ENCODE measurements at regions of chr2 and their contacts with region 1.

Region 1: DNA sequence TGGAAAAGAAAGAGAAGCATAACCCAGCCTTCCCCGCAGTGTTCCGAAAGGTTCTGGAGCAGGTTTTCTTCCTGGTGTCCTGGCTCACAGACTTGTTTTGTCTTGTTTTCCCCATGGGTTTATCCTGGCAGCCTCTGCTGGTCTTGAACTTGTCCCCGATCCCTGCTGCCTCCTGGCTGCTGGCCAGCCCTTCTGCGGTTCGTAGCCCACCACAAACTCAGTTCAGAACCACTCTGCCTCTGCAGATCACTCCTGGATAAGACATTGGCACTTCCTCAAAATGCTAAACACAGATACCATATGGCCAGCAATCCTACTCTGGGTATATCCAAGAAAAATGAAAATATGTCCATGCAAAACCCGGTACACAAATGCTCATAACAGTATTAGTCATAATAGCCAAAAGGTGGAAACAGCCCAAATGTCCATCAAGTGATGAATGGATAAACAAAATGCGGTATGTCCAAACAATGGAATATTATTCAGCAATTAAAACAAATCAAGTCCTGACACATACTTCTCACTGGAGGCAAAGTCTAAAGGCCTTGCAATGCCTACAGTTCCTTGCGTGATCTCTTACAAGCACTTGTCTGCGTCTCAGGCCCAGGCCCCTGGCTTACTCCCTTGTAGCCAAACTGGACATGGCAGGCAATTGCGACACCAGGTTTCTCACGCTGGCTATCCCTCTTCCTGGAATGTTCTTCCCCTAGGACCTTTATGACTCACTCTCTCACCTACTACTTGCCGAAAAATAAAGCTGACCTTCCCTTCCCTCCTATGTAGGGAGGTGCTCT is 28.0 kb upstream of the ARHGEF4 start:
- DNase-seq: no peak
- ATAC-seq: no peak
- H3K4me3 ChIP-seq: no peak overlapping the region
- H3K27ac ChIP-seq: no peak overlapping the region
- H3K4me1 ChIP-seq: no peaks in the 10 kb centered on the region
- H3K27me3 ChIP-seq: no peaks in the 10 kb centered on the region
- CTCF ChIP-seq: no peak
- EP300 ChIP-seq: no peak
- POLR2A ChIP-seq: no peak
- RAD21 ChIP-seq: no peak

Region 2: DNA sequence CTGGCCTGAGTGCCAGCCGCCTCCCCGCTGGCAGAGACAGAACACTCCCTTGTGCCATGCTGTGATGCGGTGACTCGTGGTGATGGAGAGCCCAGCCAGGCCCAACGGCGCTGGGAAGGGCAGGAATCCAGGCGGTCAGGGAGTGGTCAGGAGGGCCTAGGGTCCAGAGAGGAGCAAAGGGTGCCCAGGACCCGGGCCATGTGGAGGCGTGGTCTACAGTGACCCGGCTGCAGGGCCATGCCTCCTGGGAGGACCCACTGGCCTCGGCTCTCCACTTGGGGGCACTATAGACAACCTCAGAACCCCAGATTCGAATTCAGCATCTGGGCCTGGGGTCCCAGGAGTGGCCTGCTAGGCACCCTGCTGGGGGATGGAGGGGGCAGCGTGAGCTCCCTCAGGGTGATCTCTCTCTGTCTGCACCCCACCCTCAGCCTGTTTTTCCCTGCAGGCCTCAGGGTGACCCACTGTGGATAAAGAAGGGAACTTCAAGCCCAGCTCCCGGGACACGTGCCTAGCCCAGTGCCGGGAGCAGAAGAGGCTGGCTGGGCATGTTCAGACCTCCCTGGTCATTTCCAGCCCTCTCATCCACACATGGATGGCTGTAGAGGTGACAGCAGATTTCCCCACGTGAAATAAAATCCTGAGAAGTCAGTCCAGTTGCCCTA is 40.4 kb before region 1 on chr2:
- CTCF ChIA-PET with region 1: no interaction called
- POLR2A ChIA-PET with region 1: no interaction called
- RAD21 ChIA-PET with region 1: no interaction called
- SMC1A ChIA-PET with region 1: no interaction called
- in situ Hi-C with region 1: no loop called
- intact Hi-C with region 1: no loop called
- DNase-seq: no peak
- ATAC-seq: peak; percentile 67
- H3K4me3 ChIP-seq: no peak overlapping the region
- H3K27ac ChIP-seq: no peak overlapping the region
- H3K4me1 ChIP-seq: no peaks in the 10 kb centered on the region
- H3K27me3 ChIP-seq: peaks cover 0 to 1% of the 10 kb centered on the region in 2 experiments; a peak in 1 of 4 replicates
- CTCF ChIP-seq: peak; percentile 16 to 28 (median 17); a peak in 3 of 6 replicates
- EP300 ChIP-seq: no peak
- POLR2A ChIP-seq: no peak
- RAD21 ChIP-seq: no peak

Region 3: DNA sequence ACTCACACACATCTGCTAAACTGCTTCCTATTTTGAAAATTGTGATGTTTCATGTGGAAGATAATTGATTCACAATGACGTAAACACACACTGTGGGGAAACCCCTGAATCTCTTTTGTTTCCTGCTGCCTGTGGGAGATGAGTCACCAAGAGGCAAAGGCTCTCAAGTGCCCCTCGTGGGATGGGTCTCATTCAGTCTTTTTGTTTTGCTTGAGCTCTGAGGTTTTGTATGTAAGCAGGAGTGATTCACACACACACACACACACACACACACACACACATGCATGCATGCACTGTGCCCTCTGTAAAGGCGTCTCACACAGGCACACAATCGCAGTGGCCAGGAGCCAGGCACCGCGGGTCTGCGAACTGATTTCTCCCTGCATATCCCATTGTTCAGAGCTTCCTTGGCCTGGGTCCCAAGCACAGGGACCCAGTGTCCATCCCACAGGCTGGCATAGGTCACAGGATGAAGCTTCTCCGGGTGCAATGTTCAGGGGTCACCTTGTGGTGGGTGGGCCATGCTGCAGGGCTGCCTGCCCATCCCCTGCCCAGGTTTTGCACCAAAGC is 15.9 kb after region 1 on chr2:
- CTCF ChIA-PET with region 1: interaction called, 6 read pairs
- POLR2A ChIA-PET with region 1: no interaction called
- RAD21 ChIA-PET with region 1: no interaction called
- SMC1A ChIA-PET with region 1: interaction called, 20 read pairs
- in situ Hi-C with region 1: no loop called
- intact Hi-C with region 1: no loop called
- DNase-seq: peak; percentile 86
- ATAC-seq: peak; percentile 81
- H3K4me3 ChIP-seq: no peak overlapping the region
- H3K27ac ChIP-seq: no peak overlapping the region
- H3K4me1 ChIP-seq: peaks cover 15% of the 10 kb centered on the region
- H3K27me3 ChIP-seq: no peaks in the 10 kb centered on the region
- CTCF ChIP-seq: no peak
- EP300 ChIP-seq: peak in 1 of 2 experiments; percentile 85; a peak in 2 of 4 replicates
- POLR2A ChIP-seq: no peak
- RAD21 ChIP-seq: no peak